Activated T-helper 2 cell treated with anti-CD3 and anti-CD28 coated beads, Interferon-gamma antibody, Interleukin-2, Interleukin-4, amounts not matched to agents 10 μg/mL and 5 μg/mL and 100 μg/mL, durations not matched to agents 14 hours and 24 hours and 36 hours (primary cell): ENCODE measurements at regions of chr6 and their contacts with region 1.

Region 1: GRCh38 chr6:27672113-27672799 is 199.4 kb upstream of the ZNF184 start:
- DNase-seq: peak; percentile 52
- H3K4me3 Mint-ChIP-seq: peak overlapping the region; percentile 62
- H3K27ac Mint-ChIP-seq: no peak overlapping the region
- H3K4me1 Mint-ChIP-seq: peaks cover 43% of the 10 kb centered on the region
- H3K27me3 Mint-ChIP-seq: peaks cover 57% of the 10 kb centered on the region

Region 2: GRCh38 chr6:27177485-27178406 is 494.5 kb before region 1 on chr6:
- intact Hi-C with region 1: loop called (anchors 1 kb)
- DNase-seq: peak; percentile 65
- H3K4me3 Mint-ChIP-seq: peak overlapping the region; percentile 90
- H3K27ac Mint-ChIP-seq: peak overlapping the region; percentile 87
- H3K4me1 Mint-ChIP-seq: peaks cover 11% of the 10 kb centered on the region
- H3K27me3 Mint-ChIP-seq: peaks cover 37% of the 10 kb centered on the region

Region 3: GRCh38 chr6:27295301-27296081 is 376.8 kb before region 1 on chr6:
- intact Hi-C with region 1: loop called (anchors 5 kb)
- DNase-seq: no peak
- H3K4me3 Mint-ChIP-seq: no peak overlapping the region
- H3K27ac Mint-ChIP-seq: no peak overlapping the region
- H3K4me1 Mint-ChIP-seq: peaks cover 6% of the 10 kb centered on the region
- H3K27me3 Mint-ChIP-seq: peaks cover 67% of the 10 kb centered on the region

Region 4: GRCh38 chr6:27687154-27688013 is 15.1 kb after region 1 on chr6:
- intact Hi-C with region 1: loop called (anchors 2 kb)
- DNase-seq: peak; percentile 73
- H3K4me3 Mint-ChIP-seq: peak overlapping the region; percentile 88
- H3K27ac Mint-ChIP-seq: peak overlapping the region; percentile 68
- H3K4me1 Mint-ChIP-seq: peaks cover 16% of the 10 kb centered on the region
- H3K27me3 Mint-ChIP-seq: peaks cover 17% of the 10 kb centered on the region

Region 5: DNA sequence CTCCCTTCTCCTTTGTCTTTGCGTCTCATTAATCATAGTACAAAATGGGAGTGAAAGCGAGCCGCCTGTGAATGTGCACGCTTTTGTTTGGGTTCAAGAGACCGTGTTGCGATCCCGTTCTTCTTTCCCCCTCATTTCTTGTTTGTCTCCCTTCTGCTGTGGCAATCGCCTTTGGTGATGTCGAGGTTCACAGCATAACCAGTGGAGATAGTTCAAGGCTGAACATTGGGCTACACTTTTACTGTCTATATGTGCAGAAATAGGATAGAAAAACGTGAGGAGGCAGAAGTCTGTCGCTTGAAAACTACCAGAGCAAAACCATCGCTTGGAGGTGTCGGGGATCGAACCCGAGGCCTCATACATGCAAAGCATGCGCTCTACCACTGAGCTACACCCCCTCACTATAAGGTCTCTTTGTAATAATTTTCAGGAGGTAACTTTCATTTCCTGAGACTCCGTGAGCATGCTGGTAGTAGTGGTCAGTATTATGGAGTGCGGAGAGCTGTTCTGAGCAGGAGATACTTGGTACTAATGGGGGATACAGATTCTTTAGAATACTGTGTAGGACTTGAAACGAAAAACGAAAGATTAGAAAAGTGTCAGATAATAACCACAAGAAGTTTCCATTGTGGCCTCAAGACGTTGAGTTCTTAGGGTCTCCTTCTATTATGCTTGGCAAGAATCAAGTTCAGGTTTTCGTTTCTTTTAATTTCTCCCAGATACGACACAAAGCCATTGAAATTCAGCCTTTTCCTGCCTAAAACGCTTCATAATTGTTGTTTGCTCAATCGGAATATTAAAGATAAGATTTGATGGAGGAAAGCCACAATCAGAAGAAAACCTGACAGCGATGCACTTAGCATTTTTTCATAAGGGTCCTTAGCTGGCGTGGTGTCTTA is 1144.9 kb after region 1 on chr6:
- intact Hi-C with region 1: loop called (anchors 10 kb)
- DNase-seq: no peak
- H3K4me3 Mint-ChIP-seq: no peak overlapping the region
- H3K27ac Mint-ChIP-seq: no peak overlapping the region
- H3K4me1 Mint-ChIP-seq: peaks cover 12% of the 10 kb centered on the region
- H3K27me3 Mint-ChIP-seq: peaks cover 72% of the 10 kb centered on the region